H1 (cell line): ENCODE measurements at regions of chr16 and their contacts with region 1.

Region 1: GRCh38 chr16:67521095-67521804 is 7.4 kb upstream of the RIPOR1 start:
- DNase-seq: peak; percentile 91 to 99
- H3K4me3 ChIP-seq: peak overlapping the region; percentile 22 to 62 (median 50); a peak in 7 of 8 replicates
- H3K27ac ChIP-seq: peak overlapping the region; percentile 46; the same call in 1 of the 2 replicates
- H3K4me1 ChIP-seq: no peaks in the 10 kb centered on the region
- H3K27me3 ChIP-seq: peaks cover 5 to 44% (median 34%) of the 10 kb centered on the region in 4 experiments
- CTCF ChIP-seq: peak; percentile 99 to 100 (median 99)
- EP300 ChIP-seq: 0 out of 3 replicates have a peak, but pooled peaks of 1 of the 2 experiments have one; percentile 26
- POLR2A ChIP-seq: 0 out of 3 replicates have a peak, but pooled peaks of 1 of the 2 experiments have one; percentile 45
- RAD21 ChIP-seq: peak; percentile 93 to 95

Region 2: DNA sequence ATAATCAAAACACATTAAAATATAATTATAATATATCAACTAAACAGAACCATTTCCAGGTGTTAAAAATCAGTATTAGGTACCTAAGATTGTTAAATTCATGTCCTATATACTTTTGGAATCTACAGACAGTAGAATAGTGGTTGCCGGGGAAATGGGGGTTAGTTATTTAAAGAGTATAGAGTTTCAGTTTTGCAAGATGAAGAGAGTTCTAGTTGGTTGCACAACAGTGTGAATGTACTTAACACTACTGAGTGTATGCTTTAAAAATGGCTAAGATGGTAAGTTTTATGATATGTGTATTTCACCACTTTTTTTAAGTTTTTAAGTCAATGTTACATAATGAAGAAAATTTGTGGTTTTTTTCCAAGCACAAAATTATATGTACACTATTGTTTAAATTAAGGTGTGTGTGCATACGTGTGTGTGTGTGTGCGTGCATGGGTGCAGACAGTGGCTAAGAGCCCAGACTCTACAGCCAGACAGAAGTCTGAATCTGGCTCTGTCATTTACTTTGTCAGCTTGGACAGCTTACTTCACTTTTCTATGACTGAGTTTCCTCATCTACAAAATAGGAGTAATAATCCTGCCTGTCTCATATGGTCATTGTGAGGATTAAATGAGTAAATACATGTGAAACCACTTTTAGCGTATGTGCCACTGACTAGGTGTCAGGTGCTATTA is 436.8 kb before region 1 on chr16:
- CTCF ChIA-PET with region 1: no interaction called
- POLR2A ChIA-PET with region 1: no interaction called
- DNase-seq: no peak
- H3K4me3 ChIP-seq: no peak overlapping the region
- H3K27ac ChIP-seq: no peak overlapping the region
- H3K4me1 ChIP-seq: no peaks in the 10 kb centered on the region
- H3K27me3 ChIP-seq: no peaks in the 10 kb centered on the region
- CTCF ChIP-seq: no peak
- EP300 ChIP-seq: no peak
- POLR2A ChIP-seq: no peak
- RAD21 ChIP-seq: no peak

Region 3: DNA sequence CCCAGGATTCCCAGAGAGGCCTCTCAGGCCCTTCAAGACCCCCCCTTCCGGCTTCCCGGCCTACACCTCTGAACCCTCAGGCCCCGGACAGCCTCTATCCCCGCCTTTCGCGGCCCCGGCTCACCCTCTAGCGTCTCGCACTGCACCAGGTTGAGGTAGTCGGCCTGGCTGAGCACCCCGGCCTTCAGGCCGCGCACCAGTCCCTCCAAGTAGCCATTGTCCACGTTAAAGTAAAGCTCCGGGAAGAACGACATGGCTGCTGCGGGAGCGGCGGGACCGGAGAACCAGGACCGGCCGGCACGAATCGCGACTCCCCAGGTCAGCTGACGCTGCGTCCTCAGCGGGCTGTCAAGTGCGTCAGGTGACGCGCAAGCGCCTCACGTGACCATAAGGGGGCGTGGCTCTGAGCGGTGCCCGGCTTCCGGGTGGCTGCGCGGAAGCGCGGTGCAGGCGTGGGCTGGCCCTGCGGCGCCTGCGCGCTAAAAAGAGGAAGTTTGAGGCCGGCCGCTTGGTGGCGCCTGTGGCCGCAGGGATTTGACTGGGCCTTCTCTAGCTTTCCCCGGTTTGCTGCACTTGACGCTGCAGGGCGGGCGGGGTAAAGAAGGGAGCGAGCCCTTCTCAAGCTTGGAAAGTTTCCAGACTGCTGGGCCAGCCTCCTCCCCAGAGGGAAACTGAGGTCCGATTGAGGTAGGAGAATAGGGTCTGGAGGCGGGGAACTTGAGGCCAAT is 40.3 kb before region 1 on chr16 and contains the start of gene ATP6V0D1:
- CTCF ChIA-PET with region 1: interaction called, 55 read pairs
- POLR2A ChIA-PET with region 1: interaction called, 3 read pairs
- DNase-seq: peak; percentile 95 to 99
- H3K4me3 ChIP-seq: peak within 1 kb of the TSS; percentile 90 to 93 (median 91)
- H3K27ac ChIP-seq: peak within 1 kb of the TSS; percentile 70; the same call in 1 of the 2 replicates
- H3K4me1 ChIP-seq: peaks cover 0 to 3% (median 3%) of the 10 kb centered on the region in 4 experiments; a peak in 4 of 7 replicates
- H3K27me3 ChIP-seq: peaks cover 0 to 19% (median 10%) of the 10 kb centered on the region in 4 experiments; a peak in 4 of 7 replicates
- CTCF ChIP-seq: peak; percentile 75 to 90 (median 84)
- EP300 ChIP-seq: 0 out of 3 replicates have a peak, but pooled peaks of 1 of the 2 experiments have one; percentile 21
- POLR2A ChIP-seq: peak in 1 of 2 experiments; percentile 70; a peak in 2 of 3 replicates
- RAD21 ChIP-seq: peak; percentile 66 to 76
- total RNA-seq, gene ATP6V0D1: 47.3 and 54.1 TPM in 2 replicates

Region 4: GRCh38 chr16:67537270-67537635 is 16.0 kb after region 1 on chr16:
- CTCF ChIA-PET with region 1: interaction called, 80 read pairs
- POLR2A ChIA-PET with region 1: interaction called, 9 read pairs
- DNase-seq: peak in 1 of 2 experiments; percentile 71
- H3K4me3 ChIP-seq: peak overlapping the region; percentile 40 to 73 (median 49)
- H3K27ac ChIP-seq: no peak overlapping the region
- H3K4me1 ChIP-seq: peaks cover 0 to 11% (median 6%) of the 10 kb centered on the region in 4 experiments; a peak in 5 of 7 replicates
- H3K27me3 ChIP-seq: peaks cover 47 to 93% (median 88%) of the 10 kb centered on the region in 4 experiments
- CTCF ChIP-seq: no peak
- EP300 ChIP-seq: no peak
- POLR2A ChIP-seq: no peak
- RAD21 ChIP-seq: no peak

Region 5: DNA sequence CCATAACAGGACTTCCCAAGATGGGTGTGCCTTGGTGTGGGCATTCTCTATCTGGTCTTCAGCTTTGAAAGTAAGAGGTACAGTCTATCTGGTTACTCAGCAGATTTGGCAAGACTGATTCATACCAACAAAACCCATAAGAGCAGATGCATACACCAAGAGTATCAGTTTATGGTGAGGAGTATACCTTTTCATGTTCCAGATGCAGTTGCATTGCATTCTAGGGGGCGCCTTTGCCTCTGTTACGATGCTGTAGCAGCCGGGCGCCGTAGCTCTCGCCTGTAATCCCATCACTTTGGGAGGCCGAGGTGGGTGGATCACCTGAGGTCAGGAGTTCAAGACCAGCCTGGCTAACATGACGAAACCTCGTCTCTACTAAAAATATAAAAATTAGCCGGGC is 92.6 kb after region 1 on chr16:
- CTCF ChIA-PET with region 1: interaction called, 10 read pairs
- POLR2A ChIA-PET with region 1: no interaction called
- DNase-seq: peak; percentile 15 to 73
- H3K4me3 ChIP-seq: no peak overlapping the region
- H3K27ac ChIP-seq: no peak overlapping the region
- H3K4me1 ChIP-seq: no peaks in the 10 kb centered on the region
- H3K27me3 ChIP-seq: no peaks in the 10 kb centered on the region
- CTCF ChIP-seq: peak; percentile 49 to 73 (median 57)
- EP300 ChIP-seq: no peak
- POLR2A ChIP-seq: no peak
- RAD21 ChIP-seq: peak; percentile 18 to 35; a peak in 3 of 4 replicates

Region 6: GRCh38 chr16:67660564-67661028 is 139.3 kb after region 1 on chr16 and contains the start of gene PARD6A:
- CTCF ChIA-PET with region 1: interaction called, 72 read pairs
- POLR2A ChIA-PET with region 1: no interaction called
- DNase-seq: peak; percentile 93 to 94
- H3K4me3 ChIP-seq: peak within 1 kb of the TSS; percentile 86 to 98 (median 89)
- H3K27ac ChIP-seq: peak within 1 kb of the TSS; percentile 81
- H3K4me1 ChIP-seq: peaks cover 0 to 18% (median 10%) of the 10 kb centered on the region in 4 experiments; a peak in 5 of 7 replicates
- H3K27me3 ChIP-seq: peaks cover 0 to 2% (median 0%) of the 10 kb centered on the region in 4 experiments; a peak in 1 of 7 replicates
- CTCF ChIP-seq: 0 out of 4 replicates have a peak, but pooled peaks of 1 of the 3 experiments have one; percentile 5
- EP300 ChIP-seq: no peak
- POLR2A ChIP-seq: peak in 1 of 2 experiments; percentile 16; a peak in 1 of 3 replicates
- RAD21 ChIP-seq: no peak
- total RNA-seq, gene PARD6A: 14.4 and 15.1 TPM in 2 replicates